Cardiac septum (tissue), 1 donor: ENCODE measurements at regions of chr5 and their contacts with region 1.

Region 1: GRCh38 chr5:137735555-137736284 is at the start of gene KLHL3:
- DNase-seq: peak; percentile 75
- total RNA-seq, gene KLHL3: 35.1 TPM

Region 2: DNA sequence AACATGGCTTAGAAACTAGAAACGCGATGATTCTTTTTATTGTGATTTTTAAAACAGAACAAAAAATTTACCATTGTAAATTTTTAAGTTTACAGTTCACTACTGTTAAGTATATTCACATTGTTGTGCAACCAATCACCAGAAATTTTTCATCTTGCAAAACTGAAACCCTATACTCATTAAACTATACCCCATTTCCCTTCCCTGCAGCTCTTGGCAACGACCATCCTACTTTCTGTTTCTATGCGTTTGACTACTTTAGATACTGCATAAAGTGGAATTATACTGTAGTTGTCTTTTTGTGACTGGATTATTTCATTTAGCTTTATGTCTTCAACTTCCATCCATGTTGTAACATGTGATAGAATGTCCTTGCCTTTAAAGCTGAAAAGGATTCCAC is 289.1 kb before region 1 on chr5:
- intact Hi-C with region 1: no loop called
- DNase-seq: no peak

Region 3: DNA sequence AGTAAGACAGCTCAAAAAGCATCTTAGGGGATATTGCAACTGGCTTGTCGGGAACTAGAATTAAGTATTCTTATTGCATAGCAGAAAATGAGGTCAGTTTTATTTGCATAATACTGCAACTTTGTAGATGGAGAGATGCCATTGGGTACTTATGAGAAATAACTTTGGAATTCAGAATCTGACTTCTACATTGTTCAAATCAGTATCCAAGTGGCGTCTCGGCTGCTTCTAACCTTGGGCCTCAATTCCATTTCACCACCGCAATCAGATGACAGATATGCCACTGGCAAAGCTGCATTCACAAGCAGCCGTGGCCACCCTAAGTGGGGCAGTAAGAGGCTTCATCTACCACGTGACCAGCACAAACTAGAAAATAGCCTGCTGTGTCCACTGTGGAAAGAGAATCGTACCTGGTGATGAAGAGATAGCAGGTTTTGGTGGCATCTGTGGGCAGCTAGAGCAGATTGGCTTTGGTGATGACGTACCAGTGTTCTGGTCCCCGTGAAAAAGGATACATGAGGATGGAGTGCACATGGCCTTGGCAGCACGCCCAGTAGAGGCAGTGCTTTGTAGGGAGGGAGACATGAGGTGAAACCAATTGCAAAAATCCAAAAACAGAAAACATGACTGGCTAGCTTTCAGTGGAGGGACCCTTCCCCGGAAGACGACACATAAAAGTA is 116.4 kb before region 1 on chr5:
- intact Hi-C with region 1: loop called (anchors 2 kb)
- DNase-seq: peak; percentile 87

Region 4: GRCh38 chr5:137672019-137672418 is 63.7 kb before region 1 on chr5:
- intact Hi-C with region 1: no loop called
- DNase-seq: no peak

Region 5: GRCh38 chr5:137695651-137696428 is 39.9 kb before region 1 on chr5:
- intact Hi-C with region 1: loop called (anchors 5 kb)
- DNase-seq: no peak

Region 6: GRCh38 chr5:137754126-137754960 is 18.6 kb after region 1 on chr5 and contains the start of gene HNRNPA0:
- intact Hi-C with region 1: no loop called
- DNase-seq: peak; percentile 98
- total RNA-seq, gene HNRNPA0: 20.0 TPM

Region 7: GRCh38 chr5:137833463-137833862 is 97.7 kb after region 1 on chr5:
- intact Hi-C with region 1: no loop called
- DNase-seq: no peak